CD8-positive, alpha-beta T cell (primary cell): ENCODE measurements at regions of chr10 and their contacts with region 1.

Region 1: GRCh38 chr10:110771991-110772390 is 99.7 kb upstream of the PDCD4 start:
- DNase-seq: no peak
- ATAC-seq: no peak
- H3K4me3 ChIP-seq: no peak overlapping the region
- H3K4me3 Mint-ChIP-seq: no peak overlapping the region
- H3K27ac ChIP-seq: no peak overlapping the region
- H3K27ac Mint-ChIP-seq: no peak overlapping the region
- H3K4me1 ChIP-seq: no peaks in the 10 kb centered on the region
- H3K4me1 Mint-ChIP-seq: peaks cover 8% of the 10 kb centered on the region
- H3K27me3 ChIP-seq: no peaks in the 10 kb centered on the region
- H3K27me3 Mint-ChIP-seq: no peaks in the 10 kb centered on the region
- CTCF ChIP-seq: no peak

Region 2: GRCh38 chr10:110783509-110784107 is 11.6 kb after region 1 on chr10:
- CTCF ChIA-PET with region 1: interaction called, 3 read pairs
- POLR2A ChIA-PET with region 1: interaction called, 10 read pairs
- intact Hi-C with region 1: no loop called
- DNase-seq: peak; percentile 42 to 91 (median 73)
- ATAC-seq: peak; percentile 87
- H3K4me3 ChIP-seq: no peak overlapping the region
- H3K4me3 Mint-ChIP-seq: peak overlapping the region; percentile 40
- H3K27ac ChIP-seq: peak overlapping the region; percentile 40 to 67
- H3K27ac Mint-ChIP-seq: peak overlapping the region; percentile 94
- H3K4me1 ChIP-seq: peaks cover 21% of the 10 kb centered on the region
- H3K4me1 Mint-ChIP-seq: peaks cover 46% of the 10 kb centered on the region
- H3K27me3 ChIP-seq: no peaks in the 10 kb centered on the region
- H3K27me3 Mint-ChIP-seq: no peaks in the 10 kb centered on the region
- CTCF ChIP-seq: no peak